Heart right ventricle (tissue), 16 donors: ENCODE measurements at regions of chr2 and their contacts with region 1.

Region 1: DNA sequence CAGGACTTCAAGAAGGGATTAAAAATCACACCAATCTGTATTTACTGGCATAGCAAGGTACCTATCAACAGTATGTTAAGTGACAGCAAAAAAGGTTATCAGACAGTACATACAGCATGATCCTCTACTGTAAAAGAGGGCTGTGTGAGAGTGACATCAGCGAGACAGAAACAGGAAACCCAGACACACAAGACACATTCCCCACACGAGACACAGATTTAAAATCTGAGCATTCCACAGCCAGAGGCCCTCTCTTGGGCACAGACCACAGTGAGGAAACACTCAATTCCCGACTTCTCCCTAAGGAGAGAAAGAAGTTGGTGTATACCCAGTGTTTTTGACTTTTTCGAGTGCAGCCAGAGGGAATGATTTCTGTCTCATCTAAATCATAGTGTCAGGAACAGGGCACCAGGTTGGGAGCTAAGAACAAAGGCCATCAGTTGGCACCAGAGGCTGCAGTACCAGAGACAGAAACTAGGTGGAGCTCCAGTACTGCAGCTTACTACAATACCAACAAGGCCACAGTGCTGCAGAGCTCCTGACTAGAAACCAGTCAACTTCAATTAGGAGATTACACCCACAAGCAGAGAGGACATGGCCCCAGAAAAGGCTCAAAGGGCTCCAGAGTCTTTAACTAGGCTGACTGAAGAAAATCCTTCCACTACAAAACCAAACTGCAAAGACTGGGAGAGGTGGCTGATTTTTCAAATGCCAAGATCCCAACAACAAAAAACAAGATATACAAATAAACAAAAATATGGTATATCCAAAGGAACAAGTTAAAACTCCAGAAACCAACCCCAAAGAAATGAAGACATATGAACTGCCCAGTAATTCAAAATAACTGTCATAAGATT is 41.0 kb downstream of the UNC50 start:
- DNase-seq: peak; percentile 25 to 85
- ATAC-seq: peak; percentile 86 to 96 (median 92)
- H3K4me3 ChIP-seq: no peak overlapping the region
- H3K27ac ChIP-seq: peak overlapping the region in 1 of 10 donors; percentile 18
- H3K4me1 ChIP-seq: peaks cover 0 to 22% (median 0%) of the 10 kb centered on the region in 9 donors
- H3K27me3 ChIP-seq: no peaks in the 10 kb centered on the region
- CTCF ChIP-seq: peak; percentile 97 to 99 (median 99)

Region 2: GRCh38 chr2:98697651-98698337 is 48.4 kb after region 1 on chr2:
- intact Hi-C with region 1: loop called in 1 of 10 experiments (anchors 2 kb)
- DNase-seq: no peak
- ATAC-seq: no peak
- H3K4me3 ChIP-seq: no peak overlapping the region
- H3K27ac ChIP-seq: no peak overlapping the region
- H3K4me1 ChIP-seq: peaks cover 11 to 76% (median 57%) of the 10 kb centered on the region in 9 donors
- H3K27me3 ChIP-seq: no peaks in the 10 kb centered on the region
- CTCF ChIP-seq: no peak